Activated CD4-positive, alpha-beta T cell treated with anti-CD3 and anti-CD28 coated beads, Interleukin-2, amount 10 ng/mL, durations not matched to agents 24 days and 14 days (primary cell): ENCODE measurements at regions of chr2 and their contacts with region 1.

Region 1: GRCh38 chr2:74715078-74715791 is 61.2 kb downstream of the SEMA4F start:
- DNase-seq: peak; percentile 95
- H3K4me3 Mint-ChIP-seq: peak overlapping the region; percentile 92
- H3K27ac Mint-ChIP-seq: peak overlapping the region; percentile 26
- H3K4me1 Mint-ChIP-seq: peaks cover 7% of the 10 kb centered on the region
- H3K27me3 Mint-ChIP-seq: peaks cover 25% of the 10 kb centered on the region

Region 2: GRCh38 chr2:74876081-74876886 is 161.0 kb after region 1 on chr2:
- intact Hi-C with region 1: loop called (anchors 1 kb)
- DNase-seq: peak; percentile 86
- H3K4me3 Mint-ChIP-seq: no peak overlapping the region
- H3K27ac Mint-ChIP-seq: peak overlapping the region; percentile 42
- H3K4me1 Mint-ChIP-seq: peaks cover 2% of the 10 kb centered on the region
- H3K27me3 Mint-ChIP-seq: no peaks in the 10 kb centered on the region